T-cell (primary cell): ENCODE measurements at regions of chr4 and their contacts with region 1.

Region 1: GRCh38 chr4:140223056-140223810 is 69.2 kb upstream of the MAML3 start:
- DNase-seq: no peak
- ATAC-seq: no peak
- H3K4me3 ChIP-seq: no peak overlapping the region
- H3K4me3 Mint-ChIP-seq: no peak overlapping the region
- H3K27ac ChIP-seq: no peak overlapping the region
- H3K27ac Mint-ChIP-seq: no peak overlapping the region
- H3K4me1 ChIP-seq: no peaks in the 10 kb centered on the region
- H3K4me1 Mint-ChIP-seq: no peaks in the 10 kb centered on the region
- H3K27me3 ChIP-seq: no peaks in the 10 kb centered on the region
- H3K27me3 Mint-ChIP-seq: peaks cover 3 to 4% of the 10 kb centered on the region in 2 donors

Region 2: GRCh38 chr4:140266991-140267426 is 43.8 kb after region 1 on chr4:
- CTCF ChIA-PET with region 1: no interaction called
- POLR2A ChIA-PET with region 1: no interaction called
- DNase-seq: no peak
- ATAC-seq: no peak
- H3K4me3 ChIP-seq: no peak overlapping the region
- H3K4me3 Mint-ChIP-seq: no peak overlapping the region
- H3K27ac ChIP-seq: no peak overlapping the region
- H3K27ac Mint-ChIP-seq: no peak overlapping the region
- H3K4me1 ChIP-seq: no peaks in the 10 kb centered on the region
- H3K4me1 Mint-ChIP-seq: no peaks in the 10 kb centered on the region
- H3K27me3 ChIP-seq: peaks cover 0 to 13% of the 10 kb centered on the region in 2 experiments
- H3K27me3 Mint-ChIP-seq: peaks cover 0 to 5% of the 10 kb centered on the region in 2 donors

Region 3: DNA sequence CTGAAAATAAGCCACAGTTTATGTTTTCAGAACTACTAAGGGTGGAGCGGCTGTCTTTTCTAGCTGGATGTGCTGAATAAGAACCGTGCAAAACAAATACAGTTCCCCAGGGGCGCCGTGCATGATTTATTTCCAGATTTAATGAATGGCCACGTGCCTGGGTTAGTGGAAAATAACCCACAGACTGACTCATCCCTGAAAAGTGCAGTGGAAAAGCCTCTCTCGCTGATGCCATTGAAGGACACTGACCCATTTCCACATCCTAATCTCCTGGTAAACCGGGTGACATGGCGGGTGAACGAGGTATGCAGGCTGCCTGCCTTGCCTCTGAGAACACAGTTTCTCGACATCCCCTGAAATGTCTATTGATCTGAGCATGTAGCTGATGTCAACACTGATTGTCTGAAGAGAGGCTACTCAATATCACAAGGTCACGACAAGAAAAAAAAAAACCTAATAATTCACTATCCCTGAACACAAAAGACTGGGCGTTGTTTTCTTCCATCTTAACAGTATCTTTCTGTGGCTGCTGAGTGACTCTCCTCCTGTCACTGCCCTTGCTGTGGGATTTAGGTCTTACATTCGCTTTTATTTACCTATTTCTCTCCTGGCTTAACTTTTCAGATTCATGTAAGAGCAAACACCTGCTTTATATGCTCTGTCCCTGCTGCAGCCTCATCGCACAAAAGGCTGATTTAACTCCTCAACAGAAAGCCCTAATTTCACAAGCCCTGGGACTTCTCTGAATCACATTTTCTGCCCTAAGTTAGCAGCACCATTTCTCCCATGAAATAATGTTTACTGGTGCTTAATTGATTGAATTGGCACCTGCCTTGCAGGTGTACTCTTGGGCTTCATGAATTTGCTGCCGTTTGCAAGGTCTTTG is 73.3 kb after region 1 on chr4:
- CTCF ChIA-PET with region 1: no interaction called
- POLR2A ChIA-PET with region 1: interaction called in 1 of 2 experiments, 12 read pairs
- DNase-seq: no peak
- ATAC-seq: no peak
- H3K4me3 ChIP-seq: no peak overlapping the region
- H3K4me3 Mint-ChIP-seq: no peak overlapping the region
- H3K27ac ChIP-seq: no peak overlapping the region
- H3K27ac Mint-ChIP-seq: no peak overlapping the region
- H3K4me1 ChIP-seq: no peaks in the 10 kb centered on the region
- H3K4me1 Mint-ChIP-seq: no peaks in the 10 kb centered on the region
- H3K27me3 ChIP-seq: no peaks in the 10 kb centered on the region
- H3K27me3 Mint-ChIP-seq: peaks cover 8% of the 10 kb centered on the region in 2 donors

Region 4: GRCh38 chr4:141283563-141283962 is 1060.3 kb after region 1 on chr4:
- CTCF ChIA-PET with region 1: no interaction called
- POLR2A ChIA-PET with region 1: no interaction called
- DNase-seq: no peak
- ATAC-seq: no peak
- H3K4me3 ChIP-seq: no peak overlapping the region
- H3K4me3 Mint-ChIP-seq: no peak overlapping the region
- H3K27ac ChIP-seq: no peak overlapping the region
- H3K27ac Mint-ChIP-seq: no peak overlapping the region
- H3K4me1 ChIP-seq: no peaks in the 10 kb centered on the region
- H3K4me1 Mint-ChIP-seq: no peaks in the 10 kb centered on the region
- H3K27me3 ChIP-seq: no peaks in the 10 kb centered on the region
- H3K27me3 Mint-ChIP-seq: peaks cover 0 to 4% of the 10 kb centered on the region in 2 donors